HEK293 (cell line): ENCODE measurements at regions of chr6 and their contacts with region 1.

Region 1: DNA sequence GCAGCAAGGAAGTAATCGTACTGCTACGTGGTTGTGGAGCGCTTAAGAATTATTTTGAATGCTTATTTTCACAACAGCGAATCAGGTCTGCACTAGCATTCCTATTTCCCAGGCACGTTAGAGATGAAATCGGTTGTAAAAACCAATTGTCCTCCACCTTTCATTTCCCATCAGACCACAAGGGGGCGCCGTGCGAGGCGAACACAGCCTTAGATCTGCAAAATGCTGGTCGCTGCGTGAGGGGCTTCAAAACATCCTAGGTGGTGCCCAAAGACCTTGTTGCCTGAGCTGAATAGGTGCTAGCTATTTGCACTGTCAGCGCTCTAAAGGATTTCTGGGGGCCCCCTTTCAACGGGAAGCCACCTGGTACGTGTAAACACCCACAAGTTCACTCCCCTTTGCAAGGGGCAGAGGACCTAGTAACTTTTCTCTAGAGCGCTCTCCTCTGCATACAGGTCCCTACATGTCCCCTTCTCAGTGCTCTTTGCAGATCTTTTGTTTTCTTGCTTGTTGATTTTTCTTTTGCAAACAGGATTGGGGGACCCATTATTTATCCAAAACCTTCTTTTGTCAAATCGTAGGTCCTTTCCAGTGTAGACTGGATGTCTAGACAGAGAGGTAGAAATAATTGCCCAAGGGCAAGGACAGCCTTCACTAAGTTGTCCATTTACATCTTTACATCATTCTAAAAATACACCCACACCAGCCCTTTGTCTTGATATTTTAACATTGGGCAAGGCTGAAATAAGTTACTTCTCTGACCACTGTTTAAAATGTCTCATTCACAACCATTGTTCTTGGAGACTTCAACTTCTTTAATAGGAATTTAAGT is 59.8 kb downstream of the NEDD9 start:
- H3K4me3 ChIP-seq: peak overlapping the region; percentile 21
- H3K27ac ChIP-seq: no peak overlapping the region
- H3K4me1 ChIP-seq: peaks cover 5% of the 10 kb centered on the region; the same call in 1 of the 2 replicates
- CTCF ChIP-seq: peak; percentile 63

Region 2: DNA sequence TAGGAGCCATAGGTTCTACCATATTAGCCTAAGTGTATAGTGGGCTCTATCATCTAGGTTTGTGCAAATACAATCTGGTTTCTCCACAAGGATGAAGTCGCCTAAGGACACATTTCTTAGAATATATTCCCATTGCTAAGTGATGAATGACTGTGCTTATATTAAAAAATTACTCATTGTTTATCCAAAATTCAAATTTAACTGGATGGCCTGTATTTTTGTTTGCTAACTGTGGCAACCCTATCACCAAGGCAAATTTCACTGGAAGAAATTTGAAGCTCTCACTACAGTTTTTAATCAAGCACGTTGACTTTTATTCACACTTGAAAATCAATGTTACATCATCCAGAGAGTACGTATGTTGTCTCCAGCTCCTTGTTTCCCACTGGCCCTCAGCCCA is 304.8 kb before region 1 on chr6:
- CTCF ChIA-PET with region 1: no interaction called
- POLR2A ChIA-PET with region 1: no interaction called
- H3K4me3 ChIP-seq: no peak overlapping the region
- H3K27ac ChIP-seq: no peak overlapping the region
- H3K4me1 ChIP-seq: no peaks in the 10 kb centered on the region
- CTCF ChIP-seq: no peak

Region 3: DNA sequence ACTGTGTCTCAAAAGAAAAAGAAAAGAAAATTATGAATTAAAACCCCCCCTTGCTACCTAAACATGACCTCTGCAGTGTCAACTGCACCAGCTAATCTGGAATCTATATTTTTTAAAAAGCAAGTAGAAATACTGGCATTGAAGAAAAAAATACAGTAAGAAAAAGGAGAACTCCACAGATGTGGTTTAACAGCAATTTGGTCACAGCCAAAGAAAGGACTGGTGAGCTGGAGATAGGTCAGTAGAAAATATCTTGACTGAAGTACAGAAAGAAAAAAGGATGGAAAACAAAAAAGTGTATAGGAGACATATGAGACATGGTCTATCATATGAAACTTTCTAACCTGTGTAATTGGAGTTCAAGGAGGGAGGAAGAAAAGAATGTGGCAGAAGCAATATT is 17.1 kb before region 1 on chr6:
- CTCF ChIA-PET with region 1: interaction called, 13 read pairs
- POLR2A ChIA-PET with region 1: no interaction called
- H3K4me3 ChIP-seq: no peak overlapping the region
- H3K27ac ChIP-seq: no peak overlapping the region
- H3K4me1 ChIP-seq: no peaks in the 10 kb centered on the region
- CTCF ChIP-seq: no peak

Region 4: DNA sequence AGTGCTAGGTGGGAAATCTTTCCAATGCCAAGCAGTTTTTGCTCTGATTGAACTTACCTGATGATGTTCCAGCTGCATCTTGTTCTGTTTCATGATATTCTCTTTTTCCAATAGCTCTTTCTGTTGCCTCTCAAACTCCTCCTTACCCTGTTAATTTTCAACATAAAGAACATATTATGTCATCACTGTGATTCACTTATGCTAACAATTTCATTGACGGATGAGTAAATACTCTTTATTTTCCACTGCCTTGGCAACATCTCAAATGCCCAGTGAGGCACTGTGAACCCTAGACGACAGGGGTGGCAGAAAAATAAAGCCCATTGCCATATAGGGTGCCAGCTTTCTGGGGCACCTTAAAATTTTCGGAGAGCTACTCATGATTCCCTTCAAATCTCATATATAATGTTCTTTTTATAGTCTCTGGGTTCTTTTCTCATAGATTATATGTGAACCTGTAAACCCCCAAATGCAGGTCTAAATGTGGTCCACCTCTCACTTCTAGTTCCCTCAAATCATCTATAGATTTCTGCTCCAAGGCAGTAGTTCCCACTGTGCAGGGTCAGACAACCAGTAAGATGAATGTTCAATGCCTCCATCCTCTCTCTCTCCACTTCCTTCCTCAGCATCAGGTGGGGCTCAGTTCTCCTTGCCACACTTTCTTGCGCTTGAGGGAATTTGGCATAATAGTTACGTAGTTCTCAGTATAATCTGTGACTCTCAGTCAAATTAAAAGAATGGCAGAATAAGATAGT is 15.6 kb after region 1 on chr6:
- CTCF ChIA-PET with region 1: interaction called, 34 read pairs
- POLR2A ChIA-PET with region 1: no interaction called
- H3K4me3 ChIP-seq: no peak overlapping the region
- H3K27ac ChIP-seq: no peak overlapping the region
- H3K4me1 ChIP-seq: no peaks in the 10 kb centered on the region
- CTCF ChIP-seq: no peak

Region 5: DNA sequence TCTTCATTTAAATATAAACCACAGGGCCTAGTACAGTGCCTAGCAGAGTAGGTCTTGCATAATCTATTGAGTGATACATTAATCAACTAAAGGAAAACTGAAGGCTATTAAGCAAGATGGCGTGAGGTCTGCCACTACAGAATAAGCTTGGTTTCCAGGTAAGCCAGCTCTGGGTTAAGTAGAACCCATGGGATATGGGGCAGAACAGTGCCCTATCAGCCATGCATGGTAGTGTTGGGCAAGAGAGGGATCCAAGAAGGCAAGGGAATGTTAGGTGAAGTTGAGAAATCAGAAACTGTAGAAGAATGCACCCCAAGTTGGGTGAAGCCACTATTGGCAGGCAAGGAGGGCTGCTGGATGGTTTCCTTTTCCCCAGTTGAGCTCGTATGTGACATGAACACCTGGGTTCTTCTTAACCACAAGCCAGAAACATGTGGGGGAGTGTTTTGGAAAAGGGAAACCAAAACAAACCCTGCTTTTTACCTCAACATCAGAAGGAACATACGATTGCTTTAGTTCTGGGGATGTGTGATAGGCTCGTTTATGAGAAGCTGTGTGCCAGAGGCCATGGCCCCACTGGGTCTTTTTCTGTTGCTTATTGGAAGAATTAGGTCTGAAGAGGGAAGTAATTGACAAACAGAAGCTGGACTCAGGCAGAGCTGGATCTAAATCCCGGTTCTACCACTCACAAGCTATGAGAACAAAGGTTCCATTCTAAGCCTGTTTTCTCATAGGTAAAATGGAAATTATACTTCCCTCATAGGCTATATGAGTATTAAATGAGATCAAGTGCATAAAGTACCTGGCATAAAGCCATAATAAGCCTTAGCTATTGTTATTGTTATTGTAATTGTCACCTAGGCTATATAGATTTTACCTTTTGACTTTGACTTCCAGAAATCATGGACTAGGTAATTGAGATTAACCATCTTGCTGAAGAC is 26.2 kb after region 1 on chr6:
- CTCF ChIA-PET with region 1: interaction called, 10 read pairs
- POLR2A ChIA-PET with region 1: no interaction called
- H3K4me3 ChIP-seq: no peak overlapping the region
- H3K27ac ChIP-seq: no peak overlapping the region
- H3K4me1 ChIP-seq: peaks cover 15% of the 10 kb centered on the region
- CTCF ChIP-seq: no peak

Region 6: GRCh38 chr6:11552442-11552841 is 379.7 kb after region 1 on chr6:
- CTCF ChIA-PET with region 1: no interaction called
- POLR2A ChIA-PET with region 1: no interaction called
- H3K4me3 ChIP-seq: no peak overlapping the region
- H3K27ac ChIP-seq: no peak overlapping the region
- H3K4me1 ChIP-seq: peaks cover 7% of the 10 kb centered on the region
- CTCF ChIP-seq: no peak